ENCODE measurements at regions of chr2 and their contacts with region 1.

Region 1: DNA sequence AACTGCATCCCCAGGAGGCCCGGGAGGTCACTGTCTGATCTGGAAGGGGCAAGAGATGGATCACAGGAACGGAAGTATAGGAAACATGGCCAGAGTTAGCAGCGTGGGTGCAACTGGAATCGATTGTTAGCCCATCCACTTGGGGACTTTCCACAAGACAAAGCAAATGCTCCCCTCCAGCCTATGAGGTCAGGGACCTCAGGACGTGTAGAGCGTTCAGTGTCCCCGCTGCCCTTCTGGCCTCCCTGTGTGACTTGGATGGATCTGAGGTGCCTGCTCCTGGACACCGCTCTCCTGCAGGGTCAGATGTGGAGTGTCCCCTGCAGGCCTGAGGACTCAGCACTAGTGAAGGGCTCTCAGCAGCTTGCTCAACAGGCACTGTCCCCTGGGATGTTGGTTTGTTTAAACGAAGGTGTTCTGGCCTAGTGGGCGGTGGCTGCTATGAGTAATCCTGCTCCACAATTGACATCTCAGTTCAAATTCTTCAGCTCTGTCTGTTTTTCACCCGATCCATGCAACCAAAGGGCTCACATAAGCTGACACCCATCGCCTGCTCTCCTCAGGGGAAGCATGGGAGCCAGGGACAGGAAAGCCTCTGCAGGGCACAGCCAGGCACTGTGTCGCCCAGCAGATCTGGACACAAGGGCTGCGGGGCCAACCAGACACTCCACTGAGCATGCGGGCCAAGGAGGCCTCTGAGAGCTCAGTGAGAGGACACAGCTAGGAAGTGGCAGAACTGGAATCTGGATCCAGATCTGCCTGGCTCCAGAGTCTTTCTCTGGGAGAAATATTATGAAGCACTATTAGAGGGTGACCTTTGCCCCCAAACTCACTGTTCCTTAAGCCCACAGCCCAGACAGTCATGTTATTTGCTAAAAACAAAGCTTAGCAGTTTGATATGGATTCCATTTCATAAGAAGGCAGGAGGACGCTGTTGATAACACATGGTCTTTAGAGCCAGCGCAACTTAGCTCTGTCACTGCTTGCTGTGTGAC is 78.5 kb downstream of the RHOB start:
- DNase-seq: peak; percentile 55
- ATAC-seq: peak; percentile 35

Region 2: GRCh38 chr2:20450204-20450999 is 74.9 kb before region 1 on chr2:
- intact Hi-C with region 1: loop called (anchors 5 kb)
- DNase-seq: no peak
- ATAC-seq: peak; percentile 39

Region 3: GRCh38 chr2:20571644-20572215 is 46.4 kb after region 1 on chr2:
- intact Hi-C with region 1: loop called (anchors 2 kb)
- DNase-seq: no peak
- ATAC-seq: no peak

Region 4: GRCh38 chr2:20595431-20596192 is 70.3 kb after region 1 on chr2:
- intact Hi-C with region 1: loop called (anchors 5 kb)
- DNase-seq: peak; percentile 66
- ATAC-seq: no peak

Measured in Right ventricle myocardium inferior (tissue), 1 donor.